ENCODE measurements at regions of chr3 and their contacts with region 1.

Region 1: DNA sequence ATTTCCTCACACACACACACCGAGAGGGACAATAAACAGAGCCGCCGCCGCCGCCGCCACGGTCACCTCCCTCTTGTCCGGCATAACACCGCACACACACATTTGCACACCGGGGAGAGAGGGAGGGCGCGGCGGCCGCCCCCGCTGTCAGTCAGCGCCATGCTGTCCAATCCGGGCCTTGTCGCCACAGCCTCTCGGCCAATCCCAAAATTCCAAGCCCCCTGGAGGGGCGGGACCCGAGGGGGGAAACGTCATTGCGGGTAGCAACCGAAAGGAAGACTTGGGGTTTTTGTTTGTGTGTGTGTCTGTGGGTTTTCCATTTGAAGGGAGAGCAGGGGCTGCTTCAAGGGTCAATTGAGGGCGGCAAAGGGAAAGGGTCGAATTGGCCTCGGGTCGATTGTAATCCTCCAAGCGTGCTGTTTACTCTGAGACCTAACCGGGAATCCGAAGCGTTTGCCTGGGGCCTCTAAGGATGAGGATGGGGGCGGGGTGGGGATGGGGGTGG is at the start of gene TOP2B:
- DNase-seq: peak; percentile 87
- H3K4me3 ChIP-seq: peak within 1 kb of the TSS; percentile 79
- CTCF ChIP-seq: no peak

Region 2: DNA sequence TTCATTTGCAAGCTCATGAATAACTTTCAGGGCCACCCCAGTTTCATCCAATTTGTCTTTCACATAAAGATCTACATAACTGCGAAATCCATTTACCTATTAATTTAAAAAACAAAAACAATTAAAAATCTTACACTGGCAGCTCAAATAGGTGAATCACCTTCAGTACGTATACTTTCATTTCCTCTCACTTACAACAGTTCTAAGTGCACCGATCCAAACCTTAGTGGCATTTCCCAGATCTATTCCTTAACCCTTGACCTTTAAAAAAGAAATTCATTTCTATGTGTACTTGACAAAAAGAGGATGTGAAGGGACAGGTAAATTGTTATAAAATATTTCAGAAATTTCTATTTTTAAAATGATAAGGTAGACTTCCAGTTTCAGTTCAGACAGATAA is 30.9 kb before region 1 on chr3:
- in situ Hi-C with region 1: loop called (anchors 5 kb)
- DNase-seq: no peak
- H3K4me3 ChIP-seq: no peak overlapping the region
- CTCF ChIP-seq: no peak

Region 3: GRCh38 chr3:25723802-25724201 is 58.9 kb after region 1 on chr3:
- in situ Hi-C with region 1: no loop called
- DNase-seq: no peak
- H3K4me3 ChIP-seq: no peak overlapping the region
- CTCF ChIP-seq: no peak

Measured in astrocyte of the cerebellum (primary cell).